ENCODE measurements at regions of chr9 and their contacts with region 1.

Region 1: DNA sequence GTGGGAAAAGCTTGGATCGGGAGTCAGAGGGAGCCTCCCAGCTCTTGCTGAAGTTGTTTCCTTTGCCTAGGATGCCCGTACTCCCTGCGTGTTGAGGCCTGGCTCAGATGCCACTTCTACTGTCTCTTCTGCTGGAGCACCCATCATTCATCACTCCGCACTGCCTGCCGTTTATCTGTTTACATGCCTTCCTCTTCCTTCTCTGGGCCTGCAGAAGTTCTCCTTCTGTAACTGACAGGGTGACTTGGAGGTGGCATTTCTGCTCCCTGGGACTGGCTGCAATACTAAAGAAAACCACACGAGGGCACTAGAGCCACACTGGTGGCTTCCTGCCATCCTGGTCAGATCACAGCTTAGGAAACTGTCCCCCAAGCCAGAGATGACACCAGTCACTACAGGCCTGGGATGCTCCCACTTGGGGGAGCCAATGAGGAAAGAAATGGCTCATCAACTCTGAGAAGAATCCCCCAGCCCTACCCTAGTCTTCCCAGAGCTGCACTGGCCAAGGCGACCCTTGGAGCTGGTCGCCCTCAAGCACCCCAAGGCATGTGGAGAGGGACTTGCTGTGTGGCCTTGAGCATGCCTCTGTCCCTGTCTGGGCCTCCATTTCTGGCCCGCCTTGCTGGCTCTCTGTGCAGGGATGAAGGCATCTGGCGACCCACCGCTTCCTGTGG is 9.7 kb upstream of the SLC25A51 start:
- DNase-seq: peak; percentile 85
- H3K4me3 ChIP-seq: peak overlapping the region in 1 of 8 donors; percentile 23
- H3K27ac ChIP-seq: peak overlapping the region in 3 of 8 donors; percentile 19 to 71 (median 52)
- H3K4me1 ChIP-seq: peaks cover 5 to 68% (median 22%) of the 10 kb centered on the region in 6 donors
- H3K27me3 ChIP-seq: no peaks in the 10 kb centered on the region
- CTCF ChIP-seq: peak; percentile 96 to 99 (median 98)
- POLR2A ChIP-seq: no peak

Region 2: GRCh38 chr9:37852222-37852621 is 61.4 kb before region 1 on chr9:
- intact Hi-C with region 1: no loop called
- DNase-seq: no peak
- H3K4me3 ChIP-seq: no peak overlapping the region
- H3K27ac ChIP-seq: no peak overlapping the region
- H3K4me1 ChIP-seq: no peaks in the 10 kb centered on the region
- H3K27me3 ChIP-seq: no peaks in the 10 kb centered on the region
- CTCF ChIP-seq: no peak
- POLR2A ChIP-seq: no peak

Region 3: DNA sequence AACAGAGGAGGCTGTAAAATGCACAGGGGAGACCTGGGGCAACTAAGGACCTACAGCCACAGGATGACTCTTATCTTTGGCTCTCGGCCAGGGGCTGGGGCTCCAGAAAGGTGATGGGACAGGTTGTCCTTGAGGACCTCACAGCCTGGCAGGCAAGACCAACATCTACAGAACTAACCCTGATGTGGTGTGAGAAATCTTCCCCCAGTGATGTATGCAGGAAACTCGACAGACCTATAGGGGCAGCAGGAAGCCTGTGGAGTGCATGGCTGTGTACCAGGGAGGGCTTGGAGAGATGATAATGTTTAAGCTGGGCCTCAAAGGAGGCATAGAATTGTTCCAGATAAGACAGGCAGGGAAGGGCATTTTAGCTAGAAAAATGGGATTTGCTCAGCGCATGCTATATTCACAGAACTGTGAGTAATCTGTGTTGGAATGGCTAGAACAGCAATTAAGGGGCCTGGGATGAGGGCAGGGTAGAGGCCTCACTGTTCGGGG is 58.8 kb after region 1 on chr9:
- intact Hi-C with region 1: no loop called
- DNase-seq: peak; percentile 31
- H3K4me3 ChIP-seq: no peak overlapping the region
- H3K27ac ChIP-seq: no peak overlapping the region
- H3K4me1 ChIP-seq: peaks cover 0 to 17% (median 8%) of the 10 kb centered on the region in 6 donors
- H3K27me3 ChIP-seq: no peaks in the 10 kb centered on the region
- CTCF ChIP-seq: no peak
- POLR2A ChIP-seq: no peak

Region 4: DNA sequence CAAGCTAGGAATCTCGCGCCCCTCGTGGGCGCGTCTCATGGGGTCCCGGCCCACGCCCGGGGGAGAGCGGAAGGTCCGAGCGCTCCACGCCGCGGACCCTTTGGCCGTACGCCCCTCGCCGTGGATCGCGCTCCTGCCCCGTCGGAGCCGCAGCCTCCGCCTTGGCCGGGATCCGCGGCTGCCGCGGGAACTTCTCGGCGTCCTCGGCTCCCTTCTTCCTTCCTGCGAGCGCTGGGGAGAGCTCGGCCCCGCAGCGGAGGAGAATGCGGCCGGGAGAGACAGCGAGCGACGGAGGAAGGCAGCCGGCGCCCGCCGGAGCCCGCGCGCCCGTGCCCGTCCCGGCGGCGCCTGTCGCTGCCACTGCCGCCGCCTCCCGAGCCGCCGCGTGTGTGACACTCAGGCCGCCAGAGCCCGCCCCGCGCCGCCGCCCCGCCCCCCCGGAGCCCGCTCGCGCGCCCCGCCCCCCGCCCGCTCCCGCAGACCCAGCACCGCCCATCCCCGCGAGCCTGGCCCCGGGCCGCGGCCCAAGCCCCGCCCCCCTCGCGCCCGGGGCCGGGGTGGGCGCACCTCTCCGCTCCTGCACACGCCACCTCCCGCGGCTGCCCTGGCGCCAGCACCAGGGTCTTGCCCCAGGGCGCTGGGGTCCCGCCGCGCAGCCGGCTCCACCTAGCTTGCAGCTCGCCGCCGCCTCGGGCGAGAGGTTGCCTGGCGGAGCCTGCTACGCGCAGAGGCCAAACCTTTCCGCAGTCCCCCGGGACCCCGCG is 155.4 kb after region 1 on chr9 and contains the start of gene SHB:
- intact Hi-C with region 1: loop called (anchors 5 kb)
- DNase-seq: peak; percentile 95
- H3K4me3 ChIP-seq: peak within 1 kb of the TSS; percentile 87 to 99 (median 92)
- H3K27ac ChIP-seq: peak within 1 kb of the TSS; percentile 68 to 89 (median 83)
- H3K4me1 ChIP-seq: peaks cover 14 to 53% (median 37%) of the 10 kb centered on the region in 6 donors
- H3K27me3 ChIP-seq: peaks cover 0 to 28% (median 12%) of the 10 kb centered on the region in 7 donors
- CTCF ChIP-seq: peak in 8 of 11 experiments; percentile 4 to 67 (median 38)
- POLR2A ChIP-seq: peak in 1 of 3 donors; percentile 61
- total RNA-seq, gene SHB: 5.3 to 20.5 (median 8.5) TPM

Region 5: DNA sequence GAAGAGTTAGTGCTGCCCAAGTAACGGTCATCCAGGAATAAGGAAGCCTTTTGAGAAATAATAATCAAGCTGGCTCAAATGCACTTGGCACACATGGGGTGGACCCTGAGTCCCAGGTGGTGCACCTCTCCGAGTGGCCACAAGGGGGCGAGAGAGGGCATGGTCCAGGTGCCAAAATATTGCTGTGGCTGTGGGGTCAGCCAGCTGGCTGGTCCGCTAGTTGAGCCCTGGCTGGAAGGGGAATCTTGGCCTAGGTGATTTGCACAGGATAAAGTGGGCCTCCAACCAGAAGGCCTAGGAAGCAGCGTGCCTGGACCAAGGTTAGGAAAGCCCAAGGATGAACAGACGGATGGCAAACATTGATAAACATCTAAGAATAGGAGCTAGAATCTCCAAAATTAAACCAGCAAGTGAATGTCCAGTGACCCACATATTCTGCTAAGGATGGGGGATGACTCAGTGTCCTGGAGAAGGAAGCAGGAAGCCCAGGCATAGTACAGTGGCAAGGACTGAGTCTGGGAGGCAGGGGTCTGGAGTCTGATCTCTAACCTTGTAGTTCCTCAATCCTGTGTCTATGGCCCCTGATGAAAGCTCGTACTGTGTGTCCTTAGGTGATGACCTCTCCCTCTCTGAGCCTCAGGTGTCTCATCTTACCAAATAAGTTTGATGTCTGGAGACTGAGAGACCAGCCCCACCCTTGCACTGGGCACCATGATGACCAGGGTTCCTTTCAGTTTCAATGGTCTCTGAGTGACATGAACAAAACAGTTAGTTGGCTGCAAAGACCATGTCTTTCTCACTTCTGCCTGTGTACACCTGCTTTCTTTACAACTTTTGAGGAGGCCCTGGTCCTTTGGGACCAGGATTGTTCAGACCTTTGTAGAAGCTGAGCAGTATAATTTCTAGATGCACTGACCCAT is 174.6 kb after region 1 on chr9:
- intact Hi-C with region 1: loop called (anchors 5 kb)
- DNase-seq: peak; percentile 93
- H3K4me3 ChIP-seq: no peak overlapping the region
- H3K27ac ChIP-seq: no peak overlapping the region
- H3K4me1 ChIP-seq: peaks cover 0 to 16% (median 4%) of the 10 kb centered on the region in 6 donors
- H3K27me3 ChIP-seq: peaks cover 0 to 7% (median 0%) of the 10 kb centered on the region in 7 donors
- CTCF ChIP-seq: peak; percentile 83 to 96 (median 95)
- POLR2A ChIP-seq: no peak

Region 6: DNA sequence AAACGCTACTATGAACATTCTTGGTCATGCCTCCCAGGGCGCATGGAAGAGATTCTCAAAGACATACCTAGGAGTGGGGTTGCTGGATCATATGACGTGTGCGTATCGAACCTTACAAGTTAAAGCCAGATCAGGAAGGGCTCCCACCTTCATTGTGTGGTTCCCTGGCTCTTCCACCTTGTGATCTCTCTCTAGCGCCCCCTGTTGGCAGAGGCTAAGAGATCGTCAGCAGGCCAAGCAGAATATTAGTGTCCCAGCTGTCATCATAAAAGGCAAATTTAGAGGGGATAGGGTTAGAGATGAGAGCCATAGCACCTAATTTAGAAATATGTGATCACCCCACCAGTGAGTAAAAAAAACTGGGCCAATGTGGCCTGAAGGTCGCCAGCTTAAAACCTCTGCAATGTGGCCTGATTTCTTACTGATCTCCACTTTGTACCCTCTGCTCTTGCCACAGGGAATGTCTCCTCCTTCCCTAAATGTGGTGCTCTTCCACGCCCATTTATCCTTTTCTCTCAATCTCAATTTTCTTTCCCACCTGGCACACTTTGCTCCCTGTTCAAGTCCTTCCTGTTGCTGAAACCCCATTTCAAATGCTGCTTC is 247.1 kb after region 1 on chr9:
- intact Hi-C with region 1: loop called (anchors 10 kb)
- DNase-seq: no peak
- H3K4me3 ChIP-seq: no peak overlapping the region
- H3K27ac ChIP-seq: no peak overlapping the region
- H3K4me1 ChIP-seq: peaks cover 0 to 12% (median 0%) of the 10 kb centered on the region in 6 donors
- H3K27me3 ChIP-seq: no peaks in the 10 kb centered on the region
- CTCF ChIP-seq: peak in 10 of 11 experiments; percentile 41 to 79 (median 66)
- POLR2A ChIP-seq: no peak

Region 7: GRCh38 chr9:38362852-38363593 is 449.4 kb after region 1 on chr9:
- intact Hi-C with region 1: loop called (anchors 10 kb)
- DNase-seq: no peak
- H3K4me3 ChIP-seq: peak overlapping the region in 1 of 8 donors; percentile 49
- H3K27ac ChIP-seq: no peak overlapping the region
- H3K4me1 ChIP-seq: peaks cover 0 to 11% (median 0%) of the 10 kb centered on the region in 6 donors
- H3K27me3 ChIP-seq: no peaks in the 10 kb centered on the region
- CTCF ChIP-seq: peak in 10 of 11 experiments; percentile 11 to 58 (median 34)
- POLR2A ChIP-seq: no peak